ENCODE measurements at regions of chr13 and their contacts with region 1.

Region 1: DNA sequence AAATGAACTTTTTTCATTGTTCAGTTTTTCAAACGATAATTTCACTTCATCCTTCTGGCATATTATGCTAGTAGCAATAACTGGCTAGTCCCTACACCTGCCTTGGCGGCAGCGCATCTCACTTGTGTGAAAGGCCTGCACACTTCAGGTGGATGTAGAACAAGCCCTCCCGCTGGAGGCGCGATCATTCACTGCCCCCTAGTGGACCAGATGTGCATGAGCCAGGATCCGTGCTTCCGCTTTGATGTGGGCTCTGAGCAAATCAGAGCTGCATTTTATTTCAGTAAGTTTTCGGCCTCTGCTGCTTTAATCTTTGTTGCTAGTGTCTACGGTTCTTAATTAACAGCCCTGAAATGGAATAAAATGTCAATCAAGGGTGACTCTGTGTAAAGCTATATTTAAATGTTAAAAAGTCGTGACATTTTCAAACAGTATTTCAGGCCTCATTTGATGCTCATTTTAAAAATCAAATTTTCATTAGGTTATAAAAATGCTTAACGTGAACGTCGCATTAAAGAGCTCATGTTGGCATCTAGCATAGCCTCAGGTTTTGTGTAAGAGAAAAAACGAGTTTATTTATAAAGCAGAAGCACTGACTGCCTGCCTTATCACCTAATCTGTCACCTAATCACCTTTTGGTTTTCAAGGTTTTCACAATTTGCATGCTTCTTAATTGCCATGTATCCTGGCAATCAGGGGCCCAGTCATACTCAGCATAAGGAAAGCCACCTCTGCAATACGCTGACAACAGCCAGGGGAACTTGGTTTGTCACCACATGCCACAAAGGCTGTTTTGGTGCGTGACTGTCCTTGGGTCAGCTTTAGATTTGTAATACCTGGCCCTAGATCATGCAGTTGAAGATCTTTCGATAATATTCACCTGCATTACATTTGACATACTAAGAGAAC is 112.2 kb downstream of the TEX26 start:
- ATAC-seq: peak; percentile 34 to 84 (median 38)
- H3K4me3 ChIP-seq: no peak overlapping the region
- H3K27ac ChIP-seq: no peak overlapping the region
- H3K4me1 ChIP-seq: peaks cover 33 to 42% of the 10 kb centered on the region in 2 donors

Region 2: DNA sequence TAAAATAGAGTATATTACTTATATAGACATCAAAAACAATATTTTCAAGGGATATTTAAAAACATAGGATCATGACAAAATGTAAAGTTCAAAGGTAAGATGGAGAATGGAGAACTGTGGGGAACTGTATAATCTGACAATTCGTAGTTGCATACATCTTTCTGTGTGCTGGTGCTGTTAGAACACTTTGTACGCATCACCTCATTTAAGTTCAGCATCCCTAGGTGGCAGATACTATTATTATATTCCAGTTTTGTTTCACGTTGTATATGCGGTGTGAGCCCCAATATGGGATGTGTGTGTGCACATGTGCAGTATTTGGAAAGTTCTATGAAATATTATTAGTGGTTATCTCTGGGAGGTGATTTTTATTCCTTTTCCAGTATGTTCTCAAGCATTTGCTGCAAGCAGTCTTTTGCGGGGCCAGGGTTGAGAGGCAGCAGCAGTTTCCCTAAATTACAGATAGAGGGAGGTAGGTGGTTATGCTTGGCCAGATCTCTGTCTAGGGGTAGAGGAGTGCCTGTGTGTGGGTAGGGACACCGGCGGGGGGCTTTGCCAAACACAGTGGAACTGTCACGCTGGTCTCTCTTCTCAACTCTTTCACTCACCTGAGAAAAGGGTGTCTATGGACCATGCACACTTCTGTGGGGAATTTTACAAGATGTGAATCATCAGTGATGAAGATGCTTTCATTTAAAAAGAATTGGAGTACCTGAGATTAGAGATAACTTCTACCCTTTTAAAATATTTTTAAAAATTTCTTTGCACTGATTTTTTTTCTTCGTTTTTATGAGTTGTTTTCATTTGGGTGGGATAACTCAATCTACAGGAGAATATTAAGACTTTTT is 364.9 kb before region 1 on chr13:
- in situ Hi-C with region 1: loop called in 1 of 9 experiments (anchors 25 kb)
- ATAC-seq: peak; percentile 59 to 97 (median 93)
- H3K4me3 ChIP-seq: no peak overlapping the region
- H3K27ac ChIP-seq: no peak overlapping the region
- H3K4me1 ChIP-seq: peaks cover 9 to 12% of the 10 kb centered on the region in 2 donors

Region 3: GRCh38 chr13:30802953-30803478 is 241.6 kb before region 1 on chr13:
- in situ Hi-C with region 1: loop called in 1 of 9 experiments (anchors 10 kb)
- ATAC-seq: peak; percentile 95 to 100 (median 98)
- H3K4me3 ChIP-seq: peak overlapping the region in 1 of 5 donors; percentile 0
- H3K27ac ChIP-seq: peak overlapping the region in 1 of 2 donors; percentile 27
- H3K4me1 ChIP-seq: peaks cover 23 to 27% of the 10 kb centered on the region in 2 donors

Region 4: GRCh38 chr13:30865123-30866049 is 179.2 kb before region 1 on chr13:
- in situ Hi-C with region 1: loop called in 1 of 9 experiments (anchors 25 kb)
- ATAC-seq: peak; percentile 48 to 81 (median 76)
- H3K4me3 ChIP-seq: no peak overlapping the region
- H3K27ac ChIP-seq: peak overlapping the region; percentile 86 to 91
- H3K4me1 ChIP-seq: peaks cover 58 to 62% of the 10 kb centered on the region in 2 donors

Region 5: GRCh38 chr13:30943881-30944280 is 100.8 kb before region 1 on chr13:
- in situ Hi-C with region 1: no loop called
- ATAC-seq: no peak
- H3K4me3 ChIP-seq: no peak overlapping the region
- H3K27ac ChIP-seq: no peak overlapping the region
- H3K4me1 ChIP-seq: no peaks in the 10 kb centered on the region

Measured in motor neuron (in vitro differentiated cells).